BJ (cell line): ENCODE measurements at regions of chr12 and their contacts with region 1.

Region 1: DNA sequence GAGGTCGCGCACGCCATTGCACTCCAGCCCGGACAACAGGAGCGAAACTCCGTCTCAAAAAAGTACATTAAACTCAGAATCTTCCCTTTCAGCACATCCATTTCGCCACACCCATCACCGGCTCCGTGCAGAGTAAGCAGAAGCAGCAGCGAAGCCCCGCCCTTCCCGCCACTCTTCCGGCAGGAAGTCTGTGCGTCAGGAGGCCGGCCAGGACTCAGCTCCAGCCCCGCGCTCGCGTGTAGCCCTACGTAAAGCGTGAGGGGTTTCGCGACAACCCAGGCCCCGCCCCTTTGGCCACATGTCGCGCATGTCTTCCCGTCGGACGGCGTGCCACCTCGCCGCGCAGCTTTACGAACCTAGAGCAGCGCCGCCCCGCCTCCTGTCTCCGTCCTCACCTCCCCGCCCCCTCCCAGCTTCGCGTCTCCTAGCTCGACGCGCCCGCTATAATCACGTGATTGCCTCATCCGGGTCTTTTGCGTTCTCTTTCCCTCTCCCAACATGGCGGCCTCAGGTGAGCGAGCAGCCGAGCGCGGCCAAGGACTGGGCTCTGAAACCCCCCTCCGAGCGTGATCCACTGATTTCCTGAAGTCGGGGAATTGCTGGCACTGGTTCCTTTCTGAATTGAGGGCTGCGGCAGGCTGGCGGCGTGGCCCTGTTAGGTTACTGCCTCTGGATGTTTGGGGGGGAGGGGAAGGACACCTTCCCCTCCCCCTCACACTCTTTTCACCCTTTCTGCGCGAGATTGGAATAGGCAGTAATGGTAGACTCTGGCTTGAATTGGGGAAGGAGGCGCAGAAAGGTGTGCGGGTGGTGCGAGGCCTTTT is at the start of gene EIF4B:
- DNase-seq: peak; percentile 97
- H3K4me3 ChIP-seq: peak within 1 kb of the TSS; percentile 99
- H3K27me3 ChIP-seq: no peaks in the 10 kb centered on the region
- CTCF ChIP-seq: no peak
- polyA plus RNA-seq, gene EIF4B: 296 and 496 TPM in 2 replicates

Region 2: DNA sequence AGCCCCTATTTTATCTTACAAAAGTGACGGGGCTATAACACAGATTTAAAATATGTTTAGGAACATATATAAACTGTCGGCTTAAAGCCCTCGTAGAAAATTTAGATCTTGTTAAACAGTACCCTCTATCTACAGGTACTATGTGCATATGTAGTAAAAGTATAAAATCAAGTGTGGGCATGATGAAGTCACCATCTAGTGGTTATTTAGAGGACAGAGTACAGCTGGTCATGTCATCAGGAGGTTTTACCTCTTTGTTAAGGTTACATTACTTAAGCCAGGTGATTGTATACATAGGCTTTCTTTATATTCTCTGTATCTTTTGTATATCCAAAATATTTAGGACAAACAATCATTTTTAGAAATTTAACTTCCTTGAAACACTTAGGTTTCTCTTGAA is 25.4 kb after region 1 on chr12:
- CTCF ChIA-PET with region 1: no interaction called
- POLR2A ChIA-PET with region 1: interaction called, 20 read pairs
- DNase-seq: no peak
- H3K4me3 ChIP-seq: no peak overlapping the region
- H3K27me3 ChIP-seq: no peaks in the 10 kb centered on the region
- CTCF ChIP-seq: no peak